CD8-positive, alpha-beta T cell (primary cell): ENCODE measurements at regions of chr2 and their contacts with region 1.

Region 1: DNA sequence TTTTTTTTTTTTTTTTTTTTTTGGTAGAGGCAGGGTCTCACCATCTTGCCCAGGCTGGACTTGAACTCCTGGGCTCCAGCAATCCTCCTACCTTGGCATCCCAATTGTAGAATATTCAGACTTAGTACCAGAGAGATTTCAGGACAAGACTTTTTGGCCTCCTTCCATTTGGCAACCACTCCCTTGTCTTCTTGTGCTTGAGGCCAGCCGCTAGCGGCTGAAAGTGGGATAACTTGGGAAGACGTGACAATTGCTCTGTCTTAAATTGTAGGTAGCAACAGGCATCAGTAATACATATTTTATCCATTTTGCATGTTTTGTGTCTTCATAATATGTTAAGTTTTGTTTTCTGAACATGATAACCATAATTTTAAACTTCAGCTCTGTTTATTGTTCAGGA is 53.3 kb upstream of the TTN start:
- DNase-seq: no peak
- ATAC-seq: no peak
- H3K4me3 ChIP-seq: no peak overlapping the region
- H3K4me3 Mint-ChIP-seq: no peak overlapping the region
- H3K27ac ChIP-seq: no peak overlapping the region
- H3K27ac Mint-ChIP-seq: no peak overlapping the region
- H3K4me1 ChIP-seq: no peaks in the 10 kb centered on the region
- H3K4me1 Mint-ChIP-seq: no peaks in the 10 kb centered on the region
- H3K27me3 ChIP-seq: no peaks in the 10 kb centered on the region
- H3K27me3 Mint-ChIP-seq: no peaks in the 10 kb centered on the region
- CTCF ChIP-seq: no peak

Region 2: DNA sequence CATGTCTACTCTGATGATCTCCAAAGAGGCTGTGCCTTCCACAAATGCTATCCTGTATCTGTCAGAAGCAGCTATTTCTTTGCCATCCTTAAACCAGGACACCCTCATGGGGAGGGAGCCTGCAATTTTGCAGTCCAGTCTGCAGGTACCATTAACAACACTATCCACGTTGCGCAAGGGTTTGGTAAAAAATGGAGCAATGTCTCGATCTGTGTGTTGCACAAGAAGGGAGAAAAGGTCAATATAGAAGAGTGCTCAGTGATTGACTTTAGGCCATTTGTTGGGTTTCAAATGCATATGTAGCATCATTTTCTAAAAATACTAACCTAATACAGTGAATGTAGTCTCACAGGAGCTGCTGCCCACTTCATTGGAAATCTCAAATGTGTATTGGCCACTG is 127.6 kb before region 1 on chr2:
- CTCF ChIA-PET with region 1: no interaction called
- POLR2A ChIA-PET with region 1: no interaction called
- intact Hi-C with region 1: no loop called
- DNase-seq: no peak
- ATAC-seq: no peak
- H3K4me3 ChIP-seq: no peak overlapping the region
- H3K4me3 Mint-ChIP-seq: no peak overlapping the region
- H3K27ac ChIP-seq: no peak overlapping the region
- H3K27ac Mint-ChIP-seq: no peak overlapping the region
- H3K4me1 ChIP-seq: no peaks in the 10 kb centered on the region
- H3K4me1 Mint-ChIP-seq: no peaks in the 10 kb centered on the region
- H3K27me3 ChIP-seq: no peaks in the 10 kb centered on the region
- H3K27me3 Mint-ChIP-seq: no peaks in the 10 kb centered on the region
- CTCF ChIP-seq: no peak

Region 3: GRCh38 chr2:179020156-179020750 is 159.7 kb after region 1 on chr2:
- CTCF ChIA-PET with region 1: no interaction called
- POLR2A ChIA-PET with region 1: no interaction called
- intact Hi-C with region 1: loop called in 1 of 2 experiments (anchors 1 kb)
- DNase-seq: peak in 6 of 9 experiments; percentile 31 to 52 (median 42)
- ATAC-seq: peak; percentile 94
- H3K4me3 ChIP-seq: no peak overlapping the region
- H3K4me3 Mint-ChIP-seq: no peak overlapping the region
- H3K27ac ChIP-seq: no peak overlapping the region
- H3K27ac Mint-ChIP-seq: no peak overlapping the region
- H3K4me1 ChIP-seq: peaks cover 16% of the 10 kb centered on the region
- H3K4me1 Mint-ChIP-seq: peaks cover 36% of the 10 kb centered on the region
- H3K27me3 ChIP-seq: no peaks in the 10 kb centered on the region
- H3K27me3 Mint-ChIP-seq: no peaks in the 10 kb centered on the region
- CTCF ChIP-seq: peak; percentile 31